A549 (cell line): ENCODE measurements at regions of chr2 and their contacts with region 1.

Region 1: DNA sequence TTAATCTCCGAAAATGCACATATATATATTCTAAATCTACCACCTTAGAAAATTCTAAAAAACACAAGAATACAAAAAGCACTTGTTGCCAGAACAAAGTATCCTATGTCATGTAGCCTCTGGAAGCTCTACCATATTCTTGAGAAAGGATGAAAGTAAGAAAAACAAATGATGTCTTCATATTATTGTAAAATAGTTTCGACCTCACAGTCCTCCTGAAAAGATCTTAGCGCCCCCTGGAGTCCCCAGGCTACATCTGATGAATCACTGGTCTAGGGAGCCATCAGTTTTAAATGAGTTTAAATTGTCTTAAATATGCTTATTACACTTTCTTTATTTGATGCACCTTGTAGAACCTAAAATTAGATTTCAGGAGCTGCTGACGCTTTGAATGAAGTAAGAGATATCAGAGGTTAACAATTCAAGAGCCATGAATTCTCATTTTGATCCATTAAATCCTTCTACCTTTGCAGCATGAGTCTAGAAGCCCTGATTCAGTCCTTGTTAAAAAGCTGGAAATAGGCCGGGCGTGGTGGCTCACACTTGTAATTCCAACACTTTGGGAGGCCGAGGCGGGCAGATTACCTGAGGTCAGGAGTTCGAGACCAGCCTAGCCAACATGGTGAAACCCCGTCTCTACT is 138.8 kb downstream of the MCFD2 start:
- DNase-seq: peak; percentile 73 to 76
- ATAC-seq: peak; percentile 48 to 69; a peak in 3 of 6 replicates
- H3K4me3 ChIP-seq: no peak overlapping the region
- H3K27ac ChIP-seq: peak overlapping the region; percentile 15 to 76; a peak in 4 of 6 replicates
- H3K4me1 ChIP-seq: peaks cover 62% of the 10 kb centered on the region
- CTCF ChIP-seq: peak; percentile 85
- EP300 ChIP-seq: no peak
- POLR2A ChIP-seq: no peak
- RAD21 ChIP-seq: peak; percentile 73 to 82

Region 2: DNA sequence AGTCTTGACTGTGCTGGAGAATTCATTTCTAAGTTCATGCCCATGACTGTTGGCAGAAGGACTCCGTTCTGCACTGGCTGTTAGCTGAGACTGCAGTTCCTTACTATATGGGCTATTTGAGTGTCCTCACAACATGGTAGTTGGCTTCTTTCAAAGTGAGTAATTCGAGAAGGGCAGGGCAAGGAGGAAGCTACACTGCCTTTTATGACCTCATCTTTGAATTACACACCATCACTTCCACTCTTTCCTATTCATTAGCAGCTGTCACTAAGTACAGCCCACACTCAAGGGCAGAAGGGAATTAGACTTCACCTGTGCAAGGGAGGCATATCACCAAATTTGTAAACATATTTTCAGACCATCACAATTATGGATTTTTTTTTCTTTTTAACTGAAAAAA is 535.5 kb before region 1 on chr2:
- CTCF ChIA-PET with region 1: no interaction called
- POLR2A ChIA-PET with region 1: no interaction called
- DNase-seq: peak in 1 of 2 experiments; percentile 35
- ATAC-seq: peak; percentile 51 to 68; a peak in 5 of 6 replicates
- H3K4me3 ChIP-seq: no peak overlapping the region
- H3K27ac ChIP-seq: no peak overlapping the region
- H3K4me1 ChIP-seq: peaks cover 6% of the 10 kb centered on the region; the same call in 1 of the 3 replicates
- CTCF ChIP-seq: no peak
- EP300 ChIP-seq: no peak
- POLR2A ChIP-seq: no peak
- RAD21 ChIP-seq: no peak

Region 3: DNA sequence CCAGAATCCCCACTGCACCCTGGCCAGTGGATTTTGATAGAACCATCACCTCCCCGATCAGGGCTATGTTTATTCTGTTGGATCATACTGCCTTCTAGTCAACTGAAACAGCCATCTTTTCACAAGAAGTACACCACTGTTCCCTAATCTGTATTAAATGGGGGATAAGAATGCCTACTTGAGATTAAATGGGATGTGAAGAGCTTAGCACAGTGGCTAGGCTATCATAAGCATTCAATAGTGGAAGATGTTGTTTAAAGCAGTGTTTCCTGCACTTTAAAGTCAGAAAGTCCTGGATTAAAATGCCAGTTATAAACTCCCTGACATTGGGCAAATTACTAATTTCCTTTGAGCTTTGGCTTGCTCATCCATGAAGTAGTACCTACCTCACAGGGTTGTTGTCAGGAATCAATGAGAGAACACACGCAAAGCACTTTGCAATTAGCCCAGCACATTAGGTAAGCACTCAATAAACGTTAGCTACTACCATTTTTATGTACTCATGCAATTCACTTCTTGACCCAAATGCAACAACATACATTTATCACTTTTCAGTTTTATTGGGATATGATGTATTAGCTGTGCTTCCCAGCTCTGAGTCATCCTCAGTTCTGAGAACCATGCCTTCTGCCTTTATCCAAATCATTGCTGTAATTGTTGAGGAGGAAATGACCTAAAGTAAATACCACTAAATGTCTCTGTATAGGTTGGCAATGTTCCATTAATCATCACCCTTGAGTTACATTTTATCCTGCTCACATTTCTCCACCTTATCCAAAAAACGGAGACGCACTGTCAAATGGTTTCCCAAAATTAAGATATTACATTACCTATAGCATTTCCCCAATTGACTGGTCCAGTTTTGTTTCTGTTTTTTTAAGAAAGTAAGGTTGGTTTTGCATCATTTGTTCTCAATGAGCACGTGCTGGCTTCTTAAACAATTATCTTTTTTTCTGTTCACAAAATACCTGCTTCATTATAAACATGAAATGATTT is 295.3 kb before region 1 on chr2:
- CTCF ChIA-PET with region 1: no interaction called
- POLR2A ChIA-PET with region 1: no interaction called
- DNase-seq: peak; percentile 35 to 47
- ATAC-seq: peak; percentile 49 to 65; a peak in 3 of 6 replicates
- H3K4me3 ChIP-seq: no peak overlapping the region
- H3K27ac ChIP-seq: peak overlapping the region in 1 of 2 experiments; percentile 3; a peak in 1 of 6 replicates
- H3K4me1 ChIP-seq: peaks cover 18% of the 10 kb centered on the region
- CTCF ChIP-seq: no peak
- EP300 ChIP-seq: no peak
- POLR2A ChIP-seq: no peak
- RAD21 ChIP-seq: no peak

Region 4: DNA sequence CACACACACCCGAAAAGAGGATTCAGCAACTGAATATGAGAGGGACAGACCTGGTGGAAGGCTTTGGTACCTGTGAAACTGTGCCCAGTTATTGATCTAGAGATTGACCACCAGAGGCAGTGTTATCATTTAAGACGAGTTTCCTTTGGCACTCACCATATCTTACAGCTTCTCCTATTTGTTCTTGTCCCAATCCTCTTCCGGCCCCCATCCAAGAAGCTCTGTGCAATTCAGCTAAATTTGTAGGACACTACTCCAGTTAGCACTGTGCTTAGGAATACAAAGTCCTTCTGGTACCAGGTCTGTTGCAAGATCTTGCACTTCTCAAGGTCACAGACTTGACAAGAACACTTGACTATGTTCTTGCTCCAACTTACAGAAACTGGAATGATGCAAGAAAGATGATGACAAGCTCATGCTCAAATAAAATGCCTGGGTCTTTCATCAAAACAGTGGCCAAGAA is 119.7 kb before region 1 on chr2:
- CTCF ChIA-PET with region 1: interaction called, 23 read pairs
- POLR2A ChIA-PET with region 1: no interaction called
- DNase-seq: peak; percentile 62 to 73
- ATAC-seq: peak; percentile 81 to 85
- H3K4me3 ChIP-seq: no peak overlapping the region
- H3K27ac ChIP-seq: peak overlapping the region; percentile 94 to 97
- H3K4me1 ChIP-seq: peaks cover 36% of the 10 kb centered on the region
- CTCF ChIP-seq: peak; percentile 66
- EP300 ChIP-seq: no peak
- POLR2A ChIP-seq: no peak
- RAD21 ChIP-seq: peak; percentile 75

Region 5: GRCh38 chr2:46793423-46794416 is 16.9 kb after region 1 on chr2:
- CTCF ChIA-PET with region 1: interaction called, 14 read pairs
- POLR2A ChIA-PET with region 1: no interaction called
- DNase-seq: no peak
- ATAC-seq: no peak
- H3K4me3 ChIP-seq: no peak overlapping the region
- H3K27ac ChIP-seq: no peak overlapping the region
- H3K4me1 ChIP-seq: no peaks in the 10 kb centered on the region
- CTCF ChIP-seq: no peak
- EP300 ChIP-seq: no peak
- POLR2A ChIP-seq: no peak
- RAD21 ChIP-seq: no peak

Region 6: GRCh38 chr2:46803911-46804670 is 27.3 kb after region 1 on chr2:
- CTCF ChIA-PET with region 1: interaction called, 14 read pairs
- POLR2A ChIA-PET with region 1: interaction called, 5 read pairs
- DNase-seq: peak in 1 of 2 experiments; percentile 45
- ATAC-seq: peak in 1 of 2 experiments; percentile 58; a peak in 3 of 6 replicates
- H3K4me3 ChIP-seq: no peak overlapping the region
- H3K27ac ChIP-seq: peak overlapping the region; percentile 27 to 78; a peak in 5 of 6 replicates
- H3K4me1 ChIP-seq: peaks cover 30% of the 10 kb centered on the region
- CTCF ChIP-seq: no peak
- EP300 ChIP-seq: no peak
- POLR2A ChIP-seq: peak; percentile 11; the same call in 1 of the 2 replicates
- RAD21 ChIP-seq: no peak

Region 7: DNA sequence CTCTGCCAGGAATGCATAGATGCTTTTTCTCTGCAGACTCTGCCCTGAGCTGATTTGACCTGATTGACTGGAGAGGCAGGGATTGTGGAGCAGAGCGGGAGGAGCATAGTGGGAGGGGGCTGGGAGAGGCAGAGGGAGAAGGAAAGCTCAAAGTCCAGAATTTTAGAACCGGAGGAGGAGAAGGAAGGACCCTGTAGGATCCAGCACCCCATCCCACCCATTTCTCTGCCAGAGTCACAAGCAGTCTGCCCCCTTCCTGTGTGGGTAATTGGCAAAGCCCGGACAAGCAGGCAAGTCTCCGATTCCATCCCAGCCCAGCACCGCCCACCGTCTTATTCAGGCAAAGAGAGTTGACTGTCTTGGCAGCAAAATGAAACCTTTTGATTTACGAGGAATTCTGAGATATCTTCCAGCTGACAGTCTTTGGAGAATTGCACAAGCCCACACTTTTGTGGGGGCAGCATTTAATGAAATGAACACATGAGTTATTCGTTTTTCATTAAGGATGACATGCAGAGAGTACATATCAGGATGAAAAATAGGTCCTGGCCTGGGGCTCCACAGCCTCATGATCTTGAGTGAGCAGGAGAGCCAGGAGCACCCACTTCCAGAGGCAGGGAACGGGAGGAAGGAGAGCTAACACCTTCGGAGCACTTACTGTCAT is 35.7 kb after region 1 on chr2:
- CTCF ChIA-PET with region 1: interaction called, 15 read pairs
- POLR2A ChIA-PET with region 1: no interaction called
- DNase-seq: peak in 1 of 2 experiments; percentile 55
- ATAC-seq: peak; percentile 58 to 86; a peak in 5 of 6 replicates
- H3K4me3 ChIP-seq: no peak overlapping the region
- H3K27ac ChIP-seq: peak overlapping the region; percentile 65 to 83
- H3K4me1 ChIP-seq: peaks cover 22% of the 10 kb centered on the region
- CTCF ChIP-seq: no peak
- EP300 ChIP-seq: 0 out of 5 replicates have a peak, but pooled peaks of 1 of the 2 experiments have one; percentile 26
- POLR2A ChIP-seq: no peak
- RAD21 ChIP-seq: no peak